Activated B cell treated with CpG ODN at 0.5 μM for 24 hours (primary cell): ENCODE measurements at regions of chr9 and their contacts with region 1.

Region 1: GRCh38 chr9:109903515-109904138 is 123.6 kb downstream of the PALM2AKAP2 start:
- DNase-seq: no peak
- ATAC-seq: peak; percentile 65
- H3K4me3 Mint-ChIP-seq: no peak overlapping the region
- H3K27ac Mint-ChIP-seq: peak overlapping the region; percentile 69
- H3K4me1 Mint-ChIP-seq: peaks cover 21% of the 10 kb centered on the region
- H3K27me3 Mint-ChIP-seq: no peaks in the 10 kb centered on the region
- CTCF ChIP-seq: peak; percentile 25

Region 2: GRCh38 chr9:109652964-109653363 is 250.7 kb before region 1 on chr9:
- CTCF ChIA-PET with region 1: no interaction called
- POLR2A ChIA-PET with region 1: no interaction called
- intact Hi-C with region 1: no loop called
- DNase-seq: no peak
- ATAC-seq: no peak
- H3K4me3 Mint-ChIP-seq: no peak overlapping the region
- H3K27ac Mint-ChIP-seq: no peak overlapping the region
- H3K4me1 Mint-ChIP-seq: no peaks in the 10 kb centered on the region
- H3K27me3 Mint-ChIP-seq: peaks cover 6% of the 10 kb centered on the region
- CTCF ChIP-seq: no peak

Region 3: GRCh38 chr9:109918339-109919163 is 14.9 kb after region 1 on chr9:
- CTCF ChIA-PET with region 1: interaction called, 13 read pairs
- POLR2A ChIA-PET with region 1: interaction called, 4 read pairs
- intact Hi-C with region 1: no loop called
- DNase-seq: no peak
- ATAC-seq: peak; percentile 72
- H3K4me3 Mint-ChIP-seq: peak overlapping the region; percentile 58
- H3K27ac Mint-ChIP-seq: peak overlapping the region; percentile 96
- H3K4me1 Mint-ChIP-seq: peaks cover 87% of the 10 kb centered on the region
- H3K27me3 Mint-ChIP-seq: no peaks in the 10 kb centered on the region
- CTCF ChIP-seq: no peak

Region 4: DNA sequence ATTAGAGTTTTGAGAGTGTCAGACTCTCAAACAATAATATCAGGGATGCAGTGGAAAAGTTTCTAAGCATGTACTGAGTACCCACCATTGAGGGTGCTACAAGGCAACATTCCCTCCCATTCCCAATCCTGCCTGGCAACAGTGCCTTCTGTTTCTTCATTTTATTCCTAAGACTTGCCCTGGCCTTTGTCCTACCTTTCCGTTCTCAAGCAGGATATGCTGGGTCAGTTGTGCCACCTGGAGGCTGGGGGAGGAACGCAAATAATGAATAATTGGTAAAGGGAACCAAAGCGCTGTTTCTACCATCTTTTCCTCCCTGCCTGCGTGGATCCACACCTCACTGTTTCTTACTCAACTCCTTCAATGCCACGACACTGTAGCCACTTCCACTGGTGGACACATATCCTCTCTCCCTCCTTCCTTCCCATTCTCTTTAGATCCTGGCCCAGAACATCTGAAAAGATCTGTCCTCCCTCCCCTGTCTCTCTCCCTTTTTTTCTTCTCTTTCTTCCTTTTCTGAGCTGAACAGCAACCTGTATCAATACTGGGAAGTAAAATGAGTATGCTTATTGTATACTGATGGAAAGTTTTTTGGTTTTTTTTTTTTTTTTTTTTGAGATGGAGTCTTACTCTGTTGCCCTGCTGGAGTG is 154.8 kb after region 1 on chr9:
- CTCF ChIA-PET with region 1: interaction called, 67 read pairs
- POLR2A ChIA-PET with region 1: interaction called, 137 read pairs
- intact Hi-C with region 1: loop called (anchors 1 kb)
- DNase-seq: no peak
- ATAC-seq: peak; percentile 75
- H3K4me3 Mint-ChIP-seq: peak overlapping the region; percentile 33
- H3K27ac Mint-ChIP-seq: peak overlapping the region; percentile 83
- H3K4me1 Mint-ChIP-seq: peaks cover 73% of the 10 kb centered on the region
- H3K27me3 Mint-ChIP-seq: no peaks in the 10 kb centered on the region
- CTCF ChIP-seq: no peak

Region 5: GRCh38 chr9:110143950-110144545 is 240.4 kb after region 1 on chr9:
- CTCF ChIA-PET with region 1: interaction called, 140 read pairs
- POLR2A ChIA-PET with region 1: interaction called, 11 read pairs
- intact Hi-C with region 1: no loop called
- DNase-seq: no peak
- ATAC-seq: peak; percentile 84
- H3K4me3 Mint-ChIP-seq: peak overlapping the region; percentile 73
- H3K27ac Mint-ChIP-seq: peak overlapping the region; percentile 91
- H3K4me1 Mint-ChIP-seq: peaks cover 95% of the 10 kb centered on the region
- H3K27me3 Mint-ChIP-seq: no peaks in the 10 kb centered on the region
- CTCF ChIP-seq: no peak

Region 6: GRCh38 chr9:110183208-110184145 is 279.9 kb after region 1 on chr9:
- CTCF ChIA-PET with region 1: interaction called, 12 read pairs
- POLR2A ChIA-PET with region 1: no interaction called
- intact Hi-C with region 1: no loop called
- DNase-seq: no peak
- ATAC-seq: peak; percentile 62
- H3K4me3 Mint-ChIP-seq: no peak overlapping the region
- H3K27ac Mint-ChIP-seq: no peak overlapping the region
- H3K4me1 Mint-ChIP-seq: no peaks in the 10 kb centered on the region
- H3K27me3 Mint-ChIP-seq: no peaks in the 10 kb centered on the region
- CTCF ChIP-seq: no peak

Region 7: DNA sequence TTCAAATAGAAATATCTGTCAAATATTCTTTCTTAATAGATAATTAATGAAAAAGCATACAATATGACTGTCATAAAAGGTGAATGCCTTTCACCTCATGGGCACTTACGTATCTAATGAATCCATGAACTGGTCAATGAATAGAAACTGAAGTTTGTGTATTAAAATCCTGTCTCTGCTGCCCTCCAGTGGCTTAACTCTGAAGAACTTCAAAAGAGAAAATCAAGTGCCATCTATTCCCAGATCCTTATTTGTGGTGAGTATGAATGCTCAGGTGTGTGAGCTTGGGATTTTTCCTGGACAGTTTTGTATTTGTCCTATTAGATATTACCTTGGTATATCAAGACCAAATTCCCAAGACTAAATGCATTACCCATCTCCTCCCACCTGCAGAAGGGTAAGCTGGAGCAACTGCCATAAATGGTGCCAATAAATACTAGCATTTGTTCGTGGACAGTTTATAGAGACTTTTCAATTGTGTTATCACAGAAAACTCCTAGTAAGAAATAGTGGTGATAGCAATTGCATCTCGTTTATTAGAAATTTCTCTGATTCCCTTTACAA is 719.9 kb after region 1 on chr9:
- CTCF ChIA-PET with region 1: no interaction called
- POLR2A ChIA-PET with region 1: no interaction called
- intact Hi-C with region 1: loop called (anchors 10 kb)
- DNase-seq: no peak
- ATAC-seq: no peak
- H3K4me3 Mint-ChIP-seq: no peak overlapping the region
- H3K27ac Mint-ChIP-seq: no peak overlapping the region
- H3K4me1 Mint-ChIP-seq: no peaks in the 10 kb centered on the region
- H3K27me3 Mint-ChIP-seq: no peaks in the 10 kb centered on the region
- CTCF ChIP-seq: no peak

Region 8: GRCh38 chr9:111271481-111272080 is 1368.0 kb after region 1 on chr9:
- CTCF ChIA-PET with region 1: no interaction called
- POLR2A ChIA-PET with region 1: no interaction called
- intact Hi-C with region 1: no loop called
- DNase-seq: no peak
- ATAC-seq: no peak
- H3K4me3 Mint-ChIP-seq: no peak overlapping the region
- H3K27ac Mint-ChIP-seq: no peak overlapping the region
- H3K4me1 Mint-ChIP-seq: no peaks in the 10 kb centered on the region
- H3K27me3 Mint-ChIP-seq: no peaks in the 10 kb centered on the region
- CTCF ChIP-seq: no peak